OCI-LY7 (cell line): ENCODE measurements at regions of chr10 and their contacts with region 1.

Region 1: DNA sequence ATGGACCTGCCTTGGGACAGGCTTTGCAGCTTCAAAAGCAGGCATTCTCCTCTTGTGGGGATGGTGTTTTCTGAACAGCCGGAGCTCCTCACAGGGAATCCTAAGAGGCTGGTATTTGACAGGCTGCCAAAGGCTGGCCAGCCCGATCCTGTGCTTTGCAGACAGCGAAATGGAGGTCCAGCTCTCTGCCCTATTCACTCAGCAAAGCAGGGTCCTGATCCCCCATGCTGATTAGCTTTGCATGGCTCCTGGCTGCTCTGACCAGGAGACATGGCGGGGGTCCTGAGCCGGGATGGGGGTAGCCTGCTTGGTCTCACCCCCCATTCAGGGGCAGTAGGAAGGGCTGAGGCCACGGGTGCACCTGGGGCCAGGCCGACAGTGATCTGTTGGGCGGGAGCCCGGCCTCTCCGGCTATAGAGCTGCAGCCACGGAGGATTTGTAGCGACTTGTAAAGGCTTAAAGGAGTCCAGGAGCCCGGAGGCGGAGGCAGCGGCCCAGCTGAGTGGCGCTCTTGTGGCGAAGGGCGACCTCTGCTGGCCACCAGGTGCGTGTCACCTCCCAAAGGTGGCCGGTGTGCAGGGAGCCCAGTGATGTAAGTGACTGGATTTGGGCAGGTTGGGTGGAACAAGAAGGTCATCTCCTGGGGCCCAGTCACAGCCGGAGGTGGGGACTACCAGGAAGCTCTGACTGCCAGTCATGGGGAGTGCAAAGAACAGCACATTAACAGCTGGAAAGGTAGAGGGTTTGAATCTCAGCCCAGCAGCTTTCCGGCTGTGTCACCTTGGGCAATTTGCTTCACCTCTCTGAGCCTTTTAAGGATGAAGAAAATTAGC is 126.5 kb downstream of the ZMIZ1 start:
- DNase-seq: peak; percentile 81
- H3K4me3 ChIP-seq: no peak overlapping the region
- H3K27ac ChIP-seq: no peak overlapping the region
- H3K4me1 ChIP-seq: peaks cover 44% of the 10 kb centered on the region
- CTCF ChIP-seq: peak; percentile 94

Region 2: GRCh38 chr10:78211561-78212051 is 983.7 kb before region 1 on chr10:
- CTCF ChIA-PET with region 1: no interaction called
- POLR2A ChIA-PET with region 1: no interaction called
- intact Hi-C with region 1: loop called (anchors 5 kb)
- DNase-seq: peak; percentile 33
- H3K4me3 ChIP-seq: no peak overlapping the region
- H3K27ac ChIP-seq: no peak overlapping the region
- H3K4me1 ChIP-seq: peaks cover 12% of the 10 kb centered on the region
- CTCF ChIP-seq: peak; percentile 74

Region 3: DNA sequence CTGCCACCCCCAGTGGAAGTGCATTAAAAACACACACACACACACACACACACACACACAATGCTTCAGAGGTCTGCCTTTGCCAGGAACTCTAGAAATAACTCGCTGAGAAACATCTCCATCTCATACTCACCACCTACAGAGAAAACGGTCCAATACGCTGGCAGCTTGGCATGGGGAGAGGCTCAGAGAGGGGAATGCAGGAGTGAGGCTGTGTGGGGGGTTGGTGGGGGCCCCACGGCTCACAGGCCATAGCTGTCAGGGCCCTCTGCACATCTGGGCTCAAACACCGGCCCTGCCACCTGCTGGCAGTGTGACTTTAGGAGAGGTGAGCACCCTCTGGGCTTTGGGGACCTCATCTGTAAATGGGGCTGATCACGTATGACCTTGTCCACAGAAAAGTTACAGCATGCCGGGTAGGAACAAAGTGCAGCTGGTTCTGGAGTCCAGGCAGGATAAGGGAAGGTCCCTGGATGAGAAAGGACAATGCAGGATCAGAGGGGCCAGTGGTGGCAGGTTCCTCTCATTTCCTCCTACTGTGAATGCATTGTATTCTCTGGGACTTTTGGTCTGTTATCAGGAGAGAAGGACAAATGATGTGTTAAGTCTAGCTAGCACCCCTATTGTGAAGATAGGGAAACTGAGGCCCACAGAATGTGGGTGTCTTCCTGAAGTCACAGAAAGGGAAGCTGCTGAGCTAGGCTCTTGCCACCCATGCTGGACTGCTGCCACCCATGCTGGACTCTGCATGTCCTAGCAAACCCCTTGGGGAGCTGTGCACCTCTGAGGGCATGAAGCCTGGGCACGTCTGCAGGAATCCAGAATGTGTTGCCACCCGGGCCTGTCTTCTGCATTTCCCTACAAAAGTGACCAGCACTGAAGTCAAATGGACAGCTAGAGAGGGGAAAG is 757.1 kb before region 1 on chr10:
- CTCF ChIA-PET with region 1: no interaction called
- POLR2A ChIA-PET with region 1: no interaction called
- intact Hi-C with region 1: loop called (anchors 10 kb)
- DNase-seq: peak; percentile 20
- H3K4me3 ChIP-seq: no peak overlapping the region
- H3K27ac ChIP-seq: no peak overlapping the region
- H3K4me1 ChIP-seq: peaks cover 7% of the 10 kb centered on the region
- CTCF ChIP-seq: peak; percentile 59

Region 4: DNA sequence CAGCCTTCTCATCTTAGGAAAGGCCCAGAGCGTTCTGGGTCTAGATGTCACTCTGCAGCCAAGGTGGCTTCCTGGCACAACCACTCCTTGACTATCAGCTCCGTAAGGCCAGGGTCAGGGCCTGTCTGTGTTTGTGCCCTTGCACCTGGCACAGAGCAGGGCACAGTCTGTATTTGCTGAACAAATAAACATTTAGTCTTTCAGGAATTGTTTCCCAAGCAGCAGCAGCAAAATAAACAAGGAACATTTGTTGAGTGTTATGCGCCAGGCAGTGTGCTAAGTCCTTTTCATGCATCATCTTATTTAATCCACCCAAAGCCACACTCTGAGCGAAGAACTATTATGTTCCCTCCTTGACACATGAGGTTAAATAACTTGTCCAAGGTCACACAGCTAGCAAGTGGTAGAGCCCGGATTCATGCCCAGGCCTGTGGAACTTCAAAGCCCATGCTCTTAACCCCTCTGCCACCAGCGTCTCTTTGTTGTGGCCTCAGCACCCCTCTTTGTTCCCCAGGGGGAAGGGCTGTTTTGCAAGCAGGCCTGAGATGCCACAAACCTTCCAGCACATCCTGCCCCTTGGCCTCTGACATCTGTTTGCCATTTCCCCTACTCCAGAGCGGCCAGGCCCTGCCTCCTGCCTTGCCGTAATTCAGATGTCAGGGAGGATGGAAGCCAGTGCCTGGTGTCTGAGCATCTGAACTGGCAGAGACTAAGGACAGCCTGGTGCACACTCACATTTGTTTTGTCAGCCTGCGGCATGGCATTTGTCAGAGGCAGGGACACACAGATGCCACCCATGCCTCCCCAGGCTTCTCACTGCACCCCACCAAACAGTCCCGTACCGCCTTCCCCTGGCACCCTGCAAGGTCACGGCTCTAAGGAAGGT is 452.3 kb before region 1 on chr10:
- CTCF ChIA-PET with region 1: no interaction called
- POLR2A ChIA-PET with region 1: no interaction called
- intact Hi-C with region 1: loop called (anchors 5 kb)
- DNase-seq: peak; percentile 55
- H3K4me3 ChIP-seq: no peak overlapping the region
- H3K27ac ChIP-seq: no peak overlapping the region
- H3K4me1 ChIP-seq: peaks cover 8% of the 10 kb centered on the region
- CTCF ChIP-seq: no peak

Region 5: GRCh38 chr10:78852466-78853240 is 342.7 kb before region 1 on chr10:
- CTCF ChIA-PET with region 1: no interaction called
- POLR2A ChIA-PET with region 1: no interaction called
- intact Hi-C with region 1: no loop called
- DNase-seq: peak; percentile 7
- H3K4me3 ChIP-seq: no peak overlapping the region
- H3K27ac ChIP-seq: no peak overlapping the region
- H3K4me1 ChIP-seq: no peaks in the 10 kb centered on the region
- CTCF ChIP-seq: peak; percentile 52; the same call in 1 of the 2 replicates

Region 6: GRCh38 chr10:78937800-78938694 is 257.3 kb before region 1 on chr10:
- CTCF ChIA-PET with region 1: interaction called, 3 read pairs
- POLR2A ChIA-PET with region 1: no interaction called
- intact Hi-C with region 1: loop called (anchors 1 kb)
- DNase-seq: peak; percentile 43
- H3K4me3 ChIP-seq: no peak overlapping the region
- H3K27ac ChIP-seq: no peak overlapping the region
- H3K4me1 ChIP-seq: no peaks in the 10 kb centered on the region
- CTCF ChIP-seq: peak; percentile 75